Caco-2 (cell line): ENCODE measurements at regions of chr2 and their contacts with region 1.

Region 1: GRCh38 chr2:207974216-207974605 is 51.1 kb downstream of the PLEKHM3 start:
- DNase-seq: peak; percentile 58 to 60
- H3K4me3 ChIP-seq: no peak overlapping the region
- H3K4me3 Mint-ChIP-seq: peak overlapping the region; percentile 8
- H3K27ac Mint-ChIP-seq: peak overlapping the region; percentile 29
- H3K4me1 ChIP-seq: peaks cover 38% of the 10 kb centered on the region
- H3K4me1 Mint-ChIP-seq: peaks cover 31% of the 10 kb centered on the region
- H3K27me3 ChIP-seq: no peaks in the 10 kb centered on the region
- H3K27me3 Mint-ChIP-seq: no peaks in the 10 kb centered on the region
- CTCF ChIP-seq: no peak

Region 2: GRCh38 chr2:207769597-207770486 is 204.4 kb before region 1 on chr2 and contains the start of gene FZD5:
- CTCF ChIA-PET with region 1: no interaction called
- POLR2A ChIA-PET with region 1: interaction called, 10 read pairs
- intact Hi-C with region 1: loop called (anchors 1 kb)
- DNase-seq: peak; percentile 99 to 100
- H3K4me3 ChIP-seq: peak within 1 kb of the TSS; percentile 81
- H3K4me3 Mint-ChIP-seq: peak within 1 kb of the TSS; percentile 96
- H3K27ac Mint-ChIP-seq: peak within 1 kb of the TSS; percentile 88
- H3K4me1 ChIP-seq: peaks cover 60% of the 10 kb centered on the region
- H3K4me1 Mint-ChIP-seq: peaks cover 48% of the 10 kb centered on the region
- H3K27me3 ChIP-seq: no peaks in the 10 kb centered on the region
- H3K27me3 Mint-ChIP-seq: no peaks in the 10 kb centered on the region
- CTCF ChIP-seq: peak; percentile 64 to 68
- total RNA-seq, gene FZD5: 59.1 and 61.4 TPM in 2 replicates

Region 3: GRCh38 chr2:207833251-207833751 is 140.9 kb before region 1 on chr2:
- CTCF ChIA-PET with region 1: no interaction called
- POLR2A ChIA-PET with region 1: no interaction called
- intact Hi-C with region 1: loop called (anchors 5 kb)
- DNase-seq: no peak
- H3K4me3 ChIP-seq: no peak overlapping the region
- H3K4me3 Mint-ChIP-seq: no peak overlapping the region
- H3K27ac Mint-ChIP-seq: peak overlapping the region; percentile 86
- H3K4me1 ChIP-seq: peaks cover 50% of the 10 kb centered on the region
- H3K4me1 Mint-ChIP-seq: peaks cover 47% of the 10 kb centered on the region
- H3K27me3 ChIP-seq: no peaks in the 10 kb centered on the region
- H3K27me3 Mint-ChIP-seq: no peaks in the 10 kb centered on the region
- CTCF ChIP-seq: no peak

Region 4: GRCh38 chr2:207855591-207855990 is 118.6 kb before region 1 on chr2:
- CTCF ChIA-PET with region 1: no interaction called
- POLR2A ChIA-PET with region 1: no interaction called
- intact Hi-C with region 1: no loop called
- DNase-seq: no peak
- H3K4me3 ChIP-seq: no peak overlapping the region
- H3K4me3 Mint-ChIP-seq: no peak overlapping the region
- H3K27ac Mint-ChIP-seq: no peak overlapping the region
- H3K4me1 ChIP-seq: no peaks in the 10 kb centered on the region
- H3K4me1 Mint-ChIP-seq: peaks cover 9% of the 10 kb centered on the region
- H3K27me3 ChIP-seq: no peaks in the 10 kb centered on the region
- H3K27me3 Mint-ChIP-seq: no peaks in the 10 kb centered on the region
- CTCF ChIP-seq: no peak

Region 5: DNA sequence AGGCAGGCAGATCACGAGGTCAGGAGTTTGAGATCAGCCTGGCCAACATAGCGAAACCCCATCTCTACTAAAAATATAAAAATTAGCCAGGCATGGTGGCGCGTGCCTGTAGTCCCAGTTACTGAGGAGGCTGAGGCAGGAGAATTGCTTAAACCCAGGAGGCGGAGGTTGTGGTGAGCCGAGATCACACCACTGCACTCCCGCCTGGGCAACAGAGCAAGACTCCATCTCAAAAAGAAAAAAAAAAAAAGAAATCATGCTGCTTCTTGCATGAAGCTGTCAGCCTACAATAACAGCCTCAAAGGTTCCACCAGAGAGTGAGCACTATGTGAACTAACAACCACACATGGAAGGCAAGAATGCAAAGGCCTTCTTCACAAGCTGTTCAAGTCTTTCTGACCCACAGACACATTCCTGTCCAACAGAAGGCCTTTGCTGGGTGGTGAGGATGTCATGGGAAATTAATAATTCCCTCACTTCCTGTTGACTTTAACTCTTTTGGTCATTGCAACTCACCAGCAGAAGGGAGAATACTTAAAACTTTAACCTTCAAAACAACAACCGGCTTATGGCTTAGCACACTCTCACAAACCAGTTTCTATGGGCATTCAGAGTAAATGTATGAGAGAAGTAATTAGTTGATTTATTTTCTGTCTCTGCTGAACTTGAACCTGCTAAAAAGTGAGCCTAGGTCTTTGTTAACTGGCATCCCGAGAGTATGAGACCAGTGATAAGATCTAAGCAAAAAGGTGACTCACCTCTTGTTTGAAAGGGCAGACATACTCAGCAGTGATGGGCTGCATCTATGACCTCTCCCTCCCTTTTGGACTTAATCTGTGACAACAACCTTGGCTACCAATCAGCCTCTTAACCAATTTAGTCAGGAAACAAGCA is 39.3 kb after region 1 on chr2:
- CTCF ChIA-PET with region 1: interaction called, 3 read pairs
- POLR2A ChIA-PET with region 1: interaction called, 9 read pairs
- intact Hi-C with region 1: loop called (anchors 1 kb)
- DNase-seq: peak; percentile 32 to 53
- H3K4me3 ChIP-seq: no peak overlapping the region
- H3K4me3 Mint-ChIP-seq: no peak overlapping the region
- H3K27ac Mint-ChIP-seq: no peak overlapping the region
- H3K4me1 ChIP-seq: peaks cover 43% of the 10 kb centered on the region
- H3K4me1 Mint-ChIP-seq: peaks cover 10% of the 10 kb centered on the region
- H3K27me3 ChIP-seq: no peaks in the 10 kb centered on the region
- H3K27me3 Mint-ChIP-seq: no peaks in the 10 kb centered on the region
- CTCF ChIP-seq: no peak

Region 6: GRCh38 chr2:208040199-208041171 is 66.3 kb after region 1 on chr2:
- CTCF ChIA-PET with region 1: interaction called, 13 read pairs
- POLR2A ChIA-PET with region 1: no interaction called
- intact Hi-C with region 1: loop called (anchors 1 kb)
- DNase-seq: peak; percentile 80 to 83
- H3K4me3 ChIP-seq: no peak overlapping the region
- H3K4me3 Mint-ChIP-seq: no peak overlapping the region
- H3K27ac Mint-ChIP-seq: peak overlapping the region; percentile 24
- H3K4me1 ChIP-seq: peaks cover 20% of the 10 kb centered on the region
- H3K4me1 Mint-ChIP-seq: peaks cover 26% of the 10 kb centered on the region
- H3K27me3 ChIP-seq: no peaks in the 10 kb centered on the region
- H3K27me3 Mint-ChIP-seq: no peaks in the 10 kb centered on the region
- CTCF ChIP-seq: peak; percentile 73 to 81